ENCODE measurements at regions of chr10 and their contacts with region 1.

Region 1: GRCh38 chr10:25080880-25081581 is 64.6 kb downstream of the THNSL1 start:
- DNase-seq: peak; percentile 83
- ATAC-seq: peak; percentile 98
- H3K4me3 ChIP-seq: no peak overlapping the region
- H3K27ac ChIP-seq: no peak overlapping the region
- H3K4me1 ChIP-seq: peaks cover 1% of the 10 kb centered on the region; the same call in 1 of the 2 replicates
- H3K27me3 ChIP-seq: no peaks in the 10 kb centered on the region; the same call in 1 of the 2 replicates
- CTCF ChIP-seq: peak; percentile 94
- POLR2A ChIP-seq: no peak
- RAD21 ChIP-seq: peak; percentile 92

Region 2: GRCh38 chr10:24617771-24618391 is 463.1 kb before region 1 on chr10:
- CTCF ChIA-PET with region 1: interaction called, 17 read pairs
- POLR2A ChIA-PET with region 1: no interaction called
- dilution Hi-C with region 1: no loop called
- in situ Hi-C with region 1: no loop called
- intact Hi-C with region 1: loop called (anchors 1 kb)
- DNase-seq: peak; percentile 31
- ATAC-seq: no peak; the same call in 1 of the 2 replicates
- H3K4me3 ChIP-seq: no peak overlapping the region
- H3K27ac ChIP-seq: no peak overlapping the region
- H3K4me1 ChIP-seq: peaks cover 4% of the 10 kb centered on the region; the same call in 1 of the 2 replicates
- H3K27me3 ChIP-seq: no peaks in the 10 kb centered on the region
- CTCF ChIP-seq: peak; percentile 70
- POLR2A ChIP-seq: no peak
- RAD21 ChIP-seq: peak; percentile 60

Region 3: GRCh38 chr10:24642622-24643417 is 438.2 kb before region 1 on chr10:
- CTCF ChIA-PET with region 1: interaction called, 7 read pairs
- POLR2A ChIA-PET with region 1: no interaction called
- dilution Hi-C with region 1: no loop called
- in situ Hi-C with region 1: loop called (anchors 10 kb)
- intact Hi-C with region 1: loop called (anchors 2 kb)
- DNase-seq: peak; percentile 88
- ATAC-seq: peak; percentile 91
- H3K4me3 ChIP-seq: no peak overlapping the region
- H3K27ac ChIP-seq: no peak overlapping the region
- H3K4me1 ChIP-seq: peaks cover 6% of the 10 kb centered on the region
- H3K27me3 ChIP-seq: no peaks in the 10 kb centered on the region
- CTCF ChIP-seq: peak; percentile 83
- POLR2A ChIP-seq: no peak
- RAD21 ChIP-seq: peak; percentile 88

Region 4: DNA sequence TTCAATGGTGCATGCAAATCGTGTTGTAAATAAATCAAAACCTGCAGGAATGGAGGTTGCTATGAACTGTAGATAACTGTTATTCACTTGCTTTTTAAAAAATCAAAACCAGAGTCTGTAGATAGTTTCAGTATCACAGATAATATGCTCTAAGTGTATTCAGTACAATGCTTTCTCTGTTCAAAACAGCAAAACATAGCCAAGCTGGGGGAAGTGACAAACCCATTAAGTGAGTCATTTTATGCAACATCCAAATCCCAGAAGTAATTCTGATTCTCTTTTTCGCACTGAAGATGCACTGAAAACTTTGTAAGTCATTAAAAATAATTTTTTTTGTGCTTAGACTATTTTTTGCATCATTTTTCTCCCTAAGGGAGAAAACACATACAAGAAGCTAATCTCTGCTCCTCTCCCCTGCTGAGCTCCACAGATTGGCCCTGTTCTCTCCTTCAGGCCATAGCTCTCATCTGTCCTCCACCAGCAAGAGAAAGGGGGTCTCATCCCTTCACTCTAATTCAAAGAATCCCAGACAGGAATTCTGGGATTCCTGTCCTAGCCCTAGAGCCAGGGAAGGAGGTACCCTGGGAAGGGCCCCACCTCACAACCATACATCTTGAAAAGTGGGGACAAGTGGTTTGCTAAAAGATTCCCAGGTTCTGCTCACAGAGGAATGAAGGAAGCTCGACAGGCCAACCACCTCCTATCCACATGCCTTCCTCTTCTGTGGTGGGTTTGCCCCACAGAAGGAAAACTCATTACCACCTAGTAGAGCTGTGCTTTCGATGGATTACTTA is 133.5 kb before region 1 on chr10:
- CTCF ChIA-PET with region 1: no interaction called
- POLR2A ChIA-PET with region 1: no interaction called
- dilution Hi-C with region 1: no loop called
- in situ Hi-C with region 1: no loop called
- intact Hi-C with region 1: no loop called
- DNase-seq: peak; percentile 73
- ATAC-seq: peak; percentile 56
- H3K4me3 ChIP-seq: no peak overlapping the region
- H3K27ac ChIP-seq: peak overlapping the region; percentile 2; the same call in 1 of the 2 replicates
- H3K4me1 ChIP-seq: peaks cover 15% of the 10 kb centered on the region
- H3K27me3 ChIP-seq: no peaks in the 10 kb centered on the region
- CTCF ChIP-seq: no peak
- POLR2A ChIP-seq: no peak
- RAD21 ChIP-seq: no peak

Region 5: GRCh38 chr10:24958091-24958720 is 122.8 kb before region 1 on chr10:
- CTCF ChIA-PET with region 1: no interaction called
- POLR2A ChIA-PET with region 1: no interaction called
- dilution Hi-C with region 1: no loop called
- in situ Hi-C with region 1: no loop called
- intact Hi-C with region 1: loop called (anchors 1 kb)
- DNase-seq: peak; percentile 95
- ATAC-seq: peak; percentile 67
- H3K4me3 ChIP-seq: no peak overlapping the region
- H3K27ac ChIP-seq: peak overlapping the region; percentile 71; the same call in 1 of the 2 replicates
- H3K4me1 ChIP-seq: peaks cover 22% of the 10 kb centered on the region
- H3K27me3 ChIP-seq: no peaks in the 10 kb centered on the region
- CTCF ChIP-seq: no peak
- POLR2A ChIP-seq: no peak
- RAD21 ChIP-seq: no peak; the same call in 1 of the 2 replicates

Region 6: GRCh38 chr10:25016376-25017154 is 64.5 kb before region 1 on chr10 and contains the start of gene THNSL1:
- CTCF ChIA-PET with region 1: interaction called, 5 read pairs
- POLR2A ChIA-PET with region 1: no interaction called
- dilution Hi-C with region 1: no loop called
- in situ Hi-C with region 1: no loop called
- intact Hi-C with region 1: loop called (anchors 1 kb)
- DNase-seq: peak; percentile 99
- ATAC-seq: peak; percentile 99
- H3K4me3 ChIP-seq: peak within 1 kb of the TSS; percentile 79
- H3K27ac ChIP-seq: peak within 1 kb of the TSS; percentile 77
- H3K4me1 ChIP-seq: peaks cover 1% of the 10 kb centered on the region; the same call in 1 of the 2 replicates
- H3K27me3 ChIP-seq: no peaks in the 10 kb centered on the region
- CTCF ChIP-seq: no peak
- POLR2A ChIP-seq: peak; percentile 84
- RAD21 ChIP-seq: no peak
- total RNA-seq, gene THNSL1: 2.0 and 3.6 TPM in 2 replicates